ENCODE measurements at regions of chr1 and their contacts with region 1.

Region 1: GRCh38 chr1:113835642-113836307 is 23.5 kb upstream of the RSBN1 start:
- DNase-seq: peak; percentile 72
- H3K4me3 ChIP-seq: no peak overlapping the region
- H3K27ac ChIP-seq: no peak overlapping the region
- H3K4me1 ChIP-seq: no peaks in the 10 kb centered on the region
- H3K27me3 ChIP-seq: no peaks in the 10 kb centered on the region
- CTCF ChIP-seq: peak; percentile 11 to 12
- POLR2A ChIP-seq: no peak

Region 2: DNA sequence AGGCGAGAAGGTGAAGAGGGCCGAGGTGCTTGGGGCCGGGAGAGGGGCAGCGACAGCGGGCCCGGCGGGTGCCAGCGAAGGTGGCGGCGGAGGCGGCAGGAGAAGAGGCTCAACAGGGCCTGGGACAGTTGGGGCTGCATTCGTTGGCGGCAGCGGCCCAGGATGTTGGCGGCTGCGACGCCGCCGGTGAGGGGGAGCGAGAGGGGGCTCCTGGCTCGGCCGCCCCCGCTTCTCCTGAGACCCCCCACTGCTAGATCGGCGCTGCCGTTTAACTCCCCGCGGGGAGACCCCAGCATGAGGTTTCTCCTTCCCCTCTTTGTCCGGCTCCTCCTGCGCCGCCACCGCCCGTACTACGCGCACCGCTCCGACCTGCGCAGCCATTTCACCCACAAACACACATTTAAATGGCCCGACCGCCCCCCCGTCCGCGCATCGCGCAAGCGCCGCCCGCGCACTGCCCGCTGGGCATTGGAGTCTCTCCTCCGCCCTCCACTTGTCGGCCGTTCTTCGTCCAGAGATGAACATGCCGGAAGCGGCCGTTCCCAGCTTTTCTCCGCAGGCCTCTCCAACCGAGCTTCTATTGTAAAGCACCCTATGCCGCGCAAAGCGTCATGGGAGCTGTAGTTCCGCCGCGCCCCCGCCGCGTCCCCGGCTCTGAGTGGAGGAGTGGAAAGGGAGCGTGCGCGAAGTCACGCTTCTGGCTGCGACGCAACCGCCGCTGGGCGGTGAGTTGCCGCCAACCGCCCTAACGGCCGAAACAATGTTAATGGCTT is 23.7 kb before region 1 on chr1 and contains the start of gene RSBN1:
- CTCF ChIA-PET with region 1: no interaction called
- POLR2A ChIA-PET with region 1: no interaction called
- dilution Hi-C with region 1: no loop called
- intact Hi-C with region 1: no loop called
- DNase-seq: peak; percentile 100
- H3K4me3 ChIP-seq: peak within 1 kb of the TSS; percentile 65 to 97 (median 74)
- H3K27ac ChIP-seq: peak within 1 kb of the TSS; percentile 81
- H3K4me1 ChIP-seq: peaks cover 26% of the 10 kb centered on the region
- H3K27me3 ChIP-seq: no peaks in the 10 kb centered on the region
- CTCF ChIP-seq: peak in 1 of 2 donors; percentile 8
- POLR2A ChIP-seq: peak; percentile 89
- total RNA-seq, gene RSBN1: 10.8 and 13.4 TPM in 2 replicates

Region 3: DNA sequence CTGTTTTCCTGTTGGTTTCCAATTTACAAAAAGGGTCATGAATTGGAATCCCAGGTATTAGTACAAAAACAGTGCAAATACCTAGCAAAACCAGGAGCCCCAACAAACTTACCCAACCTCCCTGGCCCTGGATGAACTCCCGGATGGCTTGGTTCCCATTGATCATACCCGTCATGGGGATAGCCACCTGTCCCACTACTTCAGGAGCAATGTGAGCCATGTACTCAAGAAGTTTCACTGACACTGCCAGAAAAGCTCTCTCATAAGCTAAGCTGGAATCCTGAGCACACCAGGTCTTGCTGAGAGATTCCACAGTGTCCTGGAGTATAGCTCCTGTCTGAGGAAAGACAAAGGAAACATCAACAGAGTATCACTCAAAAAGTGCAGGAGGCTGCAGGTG is 45.9 kb after region 1 on chr1:
- CTCF ChIA-PET with region 1: interaction called, 11 read pairs
- POLR2A ChIA-PET with region 1: no interaction called
- dilution Hi-C with region 1: no loop called
- intact Hi-C with region 1: no loop called
- DNase-seq: no peak
- H3K4me3 ChIP-seq: no peak overlapping the region
- H3K27ac ChIP-seq: no peak overlapping the region
- H3K4me1 ChIP-seq: no peaks in the 10 kb centered on the region
- H3K27me3 ChIP-seq: no peaks in the 10 kb centered on the region
- CTCF ChIP-seq: no peak
- POLR2A ChIP-seq: no peak

Region 4: GRCh38 chr1:113904674-113905434 is 69.1 kb after region 1 on chr1 and contains the starts of genes AP4B1 and DCLRE1B:
- CTCF ChIA-PET with region 1: interaction called, 38 read pairs
- POLR2A ChIA-PET with region 1: no interaction called
- dilution Hi-C with region 1: no loop called
- intact Hi-C with region 1: loop called (anchors 1 kb)
- DNase-seq: peak; percentile 100
- H3K4me3 ChIP-seq: peak within 1 kb of the TSS; percentile 55 to 86 (median 60)
- H3K27ac ChIP-seq: peak within 1 kb of the TSS; percentile 72
- H3K4me1 ChIP-seq: peaks cover 12% of the 10 kb centered on the region
- H3K27me3 ChIP-seq: no peaks in the 10 kb centered on the region
- CTCF ChIP-seq: peak; percentile 60 to 73
- POLR2A ChIP-seq: peak; percentile 96
- total RNA-seq, gene AP4B1: 29.4 and 33.0 TPM in 2 replicates
- total RNA-seq, gene DCLRE1B: 10.7 and 10.8 TPM in 2 replicates

Region 5: GRCh38 chr1:113949007-113949406 is 113.2 kb after region 1 on chr1:
- CTCF ChIA-PET with region 1: interaction called, 17 read pairs
- POLR2A ChIA-PET with region 1: no interaction called
- dilution Hi-C with region 1: no loop called
- intact Hi-C with region 1: loop called (anchors 5 kb)
- DNase-seq: peak; percentile 28
- H3K4me3 ChIP-seq: no peak overlapping the region
- H3K27ac ChIP-seq: no peak overlapping the region
- H3K4me1 ChIP-seq: peaks cover 25% of the 10 kb centered on the region
- H3K27me3 ChIP-seq: no peaks in the 10 kb centered on the region
- CTCF ChIP-seq: peak; percentile 10 to 26
- POLR2A ChIP-seq: no peak

Region 6: GRCh38 chr1:114282751-114283403 is 447.1 kb after region 1 on chr1:
- CTCF ChIA-PET with region 1: interaction called, 10 read pairs
- POLR2A ChIA-PET with region 1: no interaction called
- dilution Hi-C with region 1: no loop called
- intact Hi-C with region 1: loop called (anchors 5 kb)
- DNase-seq: peak; percentile 74
- H3K4me3 ChIP-seq: no peak overlapping the region
- H3K27ac ChIP-seq: no peak overlapping the region
- H3K4me1 ChIP-seq: no peaks in the 10 kb centered on the region
- H3K27me3 ChIP-seq: peaks cover 2 to 6% of the 10 kb centered on the region in 2 experiments
- CTCF ChIP-seq: peak; percentile 77 to 90
- POLR2A ChIP-seq: no peak